ENCODE measurements at regions of chr13 and their contacts with region 1.

Region 1: DNA sequence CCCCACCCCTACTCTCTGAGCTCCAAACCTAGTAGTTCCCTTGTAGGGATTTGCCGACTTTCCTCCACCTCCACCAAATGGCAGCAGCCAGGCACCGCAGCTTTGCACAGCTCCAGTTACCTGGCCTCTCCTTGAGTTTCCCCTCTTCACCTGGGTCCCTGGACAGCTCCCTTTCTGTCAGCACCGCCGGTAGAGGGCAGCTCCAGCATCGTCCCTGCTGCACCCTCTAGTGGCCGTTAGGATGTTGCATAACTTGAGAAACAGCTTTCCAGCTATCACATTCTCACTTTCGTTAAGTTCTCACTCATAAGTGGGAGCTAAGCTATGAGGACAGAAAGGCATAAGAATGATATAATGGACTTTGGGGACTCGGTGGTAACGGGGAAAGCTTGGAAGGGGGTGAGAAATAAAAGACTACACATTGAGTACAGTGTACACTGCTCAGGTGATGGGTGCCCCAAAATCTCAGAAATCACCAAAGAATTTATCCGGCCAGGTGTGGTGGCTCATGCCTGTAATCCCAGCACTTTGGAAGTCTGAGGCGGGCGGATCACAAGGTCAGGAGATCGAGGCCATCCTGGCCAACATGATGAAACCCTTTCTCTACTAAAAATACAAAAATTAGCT is 60.4 kb upstream of the OLFM4 start:
- DNase-seq: peak; percentile 46 to 78 (median 69)
- H3K4me3 ChIP-seq: no peak overlapping the region
- H3K27ac ChIP-seq: no peak overlapping the region
- H3K27me3 ChIP-seq: no peaks in the 10 kb centered on the region
- CTCF ChIP-seq: peak; percentile 60 to 99 (median 92)

Region 2: GRCh38 chr13:52850396-52851136 is 117.6 kb before region 1 on chr13:
- intact Hi-C with region 1: loop called in 1 of 2 experiments (anchors 10 kb)
- DNase-seq: peak in 6 of 10 donors; percentile 42 to 79 (median 52)
- H3K4me3 ChIP-seq: peak overlapping the region; percentile 50 to 87 (median 66)
- H3K27ac ChIP-seq: peak overlapping the region in 53 of 59 donors; percentile 15 to 87 (median 68)
- H3K27me3 ChIP-seq: peaks cover 0 to 69% (median 45%) of the 10 kb centered on the region in 45 donors
- CTCF ChIP-seq: peak in 44 of 56 donors; percentile 11 to 49 (median 28)

Region 3: GRCh38 chr13:52896827-52897659 is 71.1 kb before region 1 on chr13:
- intact Hi-C with region 1: loop called in 1 of 2 experiments (anchors 5 kb)
- DNase-seq: no peak
- H3K4me3 ChIP-seq: no peak overlapping the region
- H3K27ac ChIP-seq: peak overlapping the region in 5 of 59 donors; percentile 5 to 38 (median 30)
- H3K27me3 ChIP-seq: peaks cover 0 to 3% (median 0%) of the 10 kb centered on the region in 45 donors
- CTCF ChIP-seq: peak; percentile 27 to 72 (median 56)

Region 4: DNA sequence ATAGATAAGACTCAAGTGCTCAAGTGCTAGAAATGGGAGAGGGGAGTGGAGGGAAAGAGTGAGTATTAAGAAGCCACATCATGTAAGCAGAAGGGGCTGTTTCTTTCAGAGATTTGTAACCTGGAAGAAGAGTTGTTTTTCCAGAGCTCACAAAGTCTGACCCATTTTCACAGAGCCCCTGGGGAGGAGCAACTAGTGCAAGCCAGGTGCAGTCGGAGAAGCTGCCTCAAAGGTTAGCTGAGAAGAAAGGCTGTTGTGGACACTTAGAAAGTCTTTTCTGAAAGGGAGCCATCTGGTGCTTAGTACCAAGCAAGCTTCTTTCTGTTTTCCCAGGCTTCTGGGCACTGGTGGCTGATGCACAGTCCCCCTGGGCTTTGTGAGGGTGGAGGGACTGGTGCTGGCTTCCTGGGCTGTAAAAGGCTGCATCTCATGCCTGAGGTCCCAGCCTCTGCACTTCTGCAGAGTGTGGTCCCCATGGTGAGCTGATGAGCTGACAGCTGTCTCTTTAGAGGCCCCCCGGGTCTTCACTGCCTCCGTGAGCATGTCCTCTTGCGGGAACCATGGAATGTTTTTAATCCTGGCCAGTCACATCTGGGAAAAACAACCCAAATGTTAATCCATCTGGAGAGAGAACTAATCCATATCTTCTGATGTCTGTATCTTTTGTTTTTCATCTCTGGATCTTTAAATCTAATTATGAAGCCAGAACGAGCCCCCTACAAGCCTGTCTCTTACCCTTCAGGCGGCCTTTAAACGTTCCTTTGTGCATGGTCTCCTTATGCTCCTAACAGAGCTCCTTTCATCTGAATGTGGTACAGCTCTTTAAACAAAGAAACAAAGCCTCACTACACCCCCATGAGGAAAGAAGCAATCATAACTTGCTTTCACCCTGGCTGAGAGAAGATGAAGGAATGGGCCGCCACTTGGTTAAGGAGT is 100.7 kb after region 1 on chr13:
- intact Hi-C with region 1: loop called in 1 of 2 experiments (anchors 1 kb)
- DNase-seq: no peak
- H3K4me3 ChIP-seq: peak overlapping the region in 29 of 59 donors; percentile 4 to 54 (median 28)
- H3K27ac ChIP-seq: peak overlapping the region in 50 of 59 donors; percentile 3 to 87 (median 71)
- H3K27me3 ChIP-seq: no peaks in the 10 kb centered on the region
- CTCF ChIP-seq: peak in 44 of 56 donors; percentile 10 to 62 (median 42)

Region 5: GRCh38 chr13:53144826-53145225 is 176.6 kb after region 1 on chr13:
- intact Hi-C with region 1: loop called in 1 of 2 experiments (anchors 5 kb)
- DNase-seq: no peak
- H3K4me3 ChIP-seq: no peak overlapping the region
- H3K27ac ChIP-seq: no peak overlapping the region
- H3K27me3 ChIP-seq: peaks cover 0 to 8% (median 0%) of the 10 kb centered on the region in 45 donors
- CTCF ChIP-seq: no peak

Region 6: DNA sequence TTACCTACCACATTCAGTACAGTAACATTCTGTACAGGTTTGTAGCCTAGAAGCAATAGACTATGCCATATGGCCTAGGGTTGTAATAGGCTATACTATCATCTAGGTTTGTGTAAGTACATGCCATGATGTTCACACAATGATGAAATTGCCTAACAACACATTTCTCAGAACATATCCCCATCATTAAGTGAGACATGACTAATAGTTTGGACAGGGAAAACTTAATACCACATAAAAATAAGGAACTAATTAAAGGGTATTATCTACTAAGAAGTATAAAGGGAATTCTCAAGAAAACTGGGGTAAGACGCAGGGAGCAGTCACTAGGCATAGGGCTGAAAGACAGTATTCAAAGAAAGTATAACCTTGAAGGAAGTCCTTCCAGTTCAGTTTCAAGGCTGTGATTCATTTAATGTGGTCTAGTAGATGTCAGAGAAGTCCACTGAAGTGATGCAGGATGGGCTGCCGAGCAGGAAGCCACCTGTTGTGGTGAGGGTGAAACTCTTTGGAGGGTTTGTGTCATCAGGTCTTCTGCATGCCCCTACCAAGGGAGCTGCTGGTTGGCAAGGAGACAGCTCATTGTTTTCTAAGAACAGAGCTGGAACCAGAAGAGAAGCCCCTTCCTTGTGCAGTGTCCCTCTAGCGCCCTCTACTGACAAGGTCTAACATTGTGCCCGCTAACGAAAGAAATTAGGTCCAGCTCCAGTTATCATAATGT is 183.3 kb after region 1 on chr13:
- intact Hi-C with region 1: loop called (anchors 2 to 5 kb)
- DNase-seq: peak in 2 of 10 donors; percentile 52 to 56
- H3K4me3 ChIP-seq: no peak overlapping the region
- H3K27ac ChIP-seq: no peak overlapping the region
- H3K27me3 ChIP-seq: peaks cover 0 to 10% (median 0%) of the 10 kb centered on the region in 45 donors
- CTCF ChIP-seq: peak; percentile 32 to 90 (median 75)